Ovary (tissue), 10 donors: ENCODE measurements at regions of chr7 and their contacts with region 1.

Region 1: DNA sequence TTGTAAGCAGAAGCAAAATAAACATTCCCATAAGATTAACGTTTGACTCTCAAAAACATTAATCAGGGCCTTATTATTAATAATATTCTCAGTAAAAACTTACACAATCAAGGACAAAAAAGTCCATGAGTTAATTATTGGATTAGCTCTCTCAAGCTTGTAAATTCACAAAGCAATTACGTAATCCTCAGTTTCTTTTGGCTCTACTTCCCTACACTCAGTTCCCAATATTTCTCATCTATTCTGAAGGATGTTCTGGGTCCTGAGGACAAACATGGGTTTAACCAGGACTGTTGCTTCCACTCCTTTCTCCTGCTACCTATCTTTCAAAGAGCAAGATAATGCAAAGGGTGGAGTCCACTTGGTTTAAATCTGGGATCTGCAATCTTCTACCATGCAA is 15.1 kb downstream of the FBXL13 start:
- DNase-seq: no peak
- H3K4me3 ChIP-seq: no peak overlapping the region
- H3K27ac ChIP-seq: no peak overlapping the region
- H3K4me1 ChIP-seq: peaks cover 3% of the 10 kb centered on the region
- H3K27me3 ChIP-seq: no peaks in the 10 kb centered on the region
- CTCF ChIP-seq: no peak
- EP300 ChIP-seq: no peak
- POLR2A ChIP-seq: no peak

Region 2: GRCh38 chr7:102874166-102874829 is 185.2 kb before region 1 on chr7:
- intact Hi-C with region 1: no loop called
- DNase-seq: no peak
- H3K4me3 ChIP-seq: no peak overlapping the region
- H3K27ac ChIP-seq: no peak overlapping the region
- H3K4me1 ChIP-seq: no peaks in the 10 kb centered on the region
- H3K27me3 ChIP-seq: no peaks in the 10 kb centered on the region
- CTCF ChIP-seq: no peak
- EP300 ChIP-seq: no peak
- POLR2A ChIP-seq: no peak

Region 3: GRCh38 chr7:102912742-102913141 is 146.7 kb before region 1 on chr7 and contains the start of gene LRRC17:
- intact Hi-C with region 1: loop called in 1 of 4 experiments (anchors 10 kb)
- DNase-seq: peak; percentile 50 to 65 (median 53)
- H3K4me3 ChIP-seq: peak within 1 kb of the TSS; percentile 36
- H3K27ac ChIP-seq: peak within 1 kb of the TSS; percentile 65 to 82
- H3K4me1 ChIP-seq: peaks cover 6% of the 10 kb centered on the region
- H3K27me3 ChIP-seq: no peaks in the 10 kb centered on the region
- CTCF ChIP-seq: no peak
- EP300 ChIP-seq: no peak
- POLR2A ChIP-seq: no peak
- total RNA-seq, gene LRRC17: 32.2 to 145 (median 60.4) TPM